ENCODE measurements at regions of chrX and their contacts with region 1.

Region 1: GRCh38 chrX:13646154-13646549 is 6.8 kb upstream of the TCEANC start:
- DNase-seq: peak in 2 of 3 donors; percentile 50 to 60
- H3K4me3 ChIP-seq: no peak overlapping the region
- H3K27ac ChIP-seq: no peak overlapping the region
- H3K4me1 ChIP-seq: peaks cover 0 to 7% (median 0%) of the 10 kb centered on the region in 4 experiments
- H3K27me3 ChIP-seq: no peaks in the 10 kb centered on the region

Region 2: DNA sequence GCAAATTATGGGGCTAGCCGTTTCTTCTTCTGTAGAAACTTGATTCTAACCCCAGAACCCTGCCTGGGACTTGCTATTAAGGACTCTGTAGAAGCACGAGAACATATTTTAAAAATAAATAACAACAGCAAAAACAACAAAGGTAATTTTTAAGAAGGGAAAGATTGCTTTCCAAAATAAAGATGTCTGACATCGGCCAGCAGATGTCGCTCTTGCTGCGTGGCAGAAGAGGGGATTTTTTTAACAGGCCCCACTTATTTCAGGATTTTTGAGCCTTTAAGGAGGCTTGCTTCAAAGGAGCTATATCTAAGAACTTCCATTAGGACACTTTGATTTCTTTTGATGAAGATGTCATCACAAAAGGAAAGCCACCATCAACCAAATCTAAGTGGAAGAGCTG is 139.6 kb before region 1 on chrX:
- CTCF ChIA-PET with region 1: interaction called, 62 read pairs
- POLR2A ChIA-PET with region 1: no interaction called
- DNase-seq: peak; percentile 39 to 74 (median 64)
- H3K4me3 ChIP-seq: no peak overlapping the region
- H3K27ac ChIP-seq: no peak overlapping the region
- H3K4me1 ChIP-seq: no peaks in the 10 kb centered on the region
- H3K27me3 ChIP-seq: no peaks in the 10 kb centered on the region

Region 3: GRCh38 chrX:13533726-13534125 is 112.4 kb before region 1 on chrX:
- CTCF ChIA-PET with region 1: interaction called, 10 read pairs
- POLR2A ChIA-PET with region 1: no interaction called
- DNase-seq: no peak
- H3K4me3 ChIP-seq: no peak overlapping the region
- H3K27ac ChIP-seq: no peak overlapping the region
- H3K4me1 ChIP-seq: peaks cover 0 to 8% (median 5%) of the 10 kb centered on the region in 4 experiments
- H3K27me3 ChIP-seq: peaks cover 0 to 15% (median 3%) of the 10 kb centered on the region in 5 experiments

Measured in common myeloid progenitor, CD34-positive (primary cell).